Esophagus squamous epithelium (tissue), 5 donors: ENCODE measurements at regions of chr6 and their contacts with region 1.

Region 1: DNA sequence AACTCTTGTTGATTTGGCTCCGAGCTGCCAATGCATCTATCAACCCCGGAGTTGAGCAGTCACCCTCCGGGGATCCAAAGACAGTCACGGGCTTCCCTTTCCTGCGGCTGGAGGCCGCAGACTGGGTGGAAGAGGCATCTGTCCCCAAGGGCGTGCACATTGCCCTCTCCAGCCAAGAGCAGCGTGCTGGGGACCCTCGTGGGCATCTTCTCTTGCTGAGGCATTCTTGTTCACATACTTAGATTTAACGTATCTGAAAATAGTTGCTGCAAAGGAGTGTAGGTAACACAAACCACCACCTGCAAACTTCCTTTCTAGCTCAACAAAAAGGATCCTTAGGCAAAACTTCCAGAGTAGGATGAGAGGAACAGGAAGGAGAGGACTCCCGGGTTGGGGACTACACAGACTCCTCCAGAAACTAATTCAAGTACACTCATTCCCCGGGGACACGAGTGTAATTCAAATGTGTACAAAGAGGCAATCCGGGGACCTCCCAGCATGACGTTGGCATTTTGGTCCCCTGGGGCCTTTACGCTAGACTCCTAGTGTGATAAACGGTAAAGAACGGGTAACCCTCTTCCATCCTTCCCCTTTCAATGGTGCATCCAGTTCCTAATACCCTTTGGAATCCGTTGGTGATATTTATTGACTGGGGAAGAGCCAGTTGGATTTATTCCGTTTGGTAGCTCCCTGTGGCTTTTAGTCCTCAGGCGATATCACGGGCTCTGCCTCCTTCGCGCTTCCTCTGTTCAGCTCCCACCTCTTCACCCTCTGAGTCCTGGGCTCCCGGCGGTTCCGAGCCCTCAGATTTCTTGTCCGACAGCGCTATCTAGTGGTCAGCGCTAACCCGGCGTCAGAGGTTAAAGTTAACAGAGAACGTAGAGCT is 2.7 kb upstream of the COL12A1 start:
- DNase-seq: peak; percentile 4
- H3K4me3 ChIP-seq: peak overlapping the region in 3 of 4 donors; percentile 8 to 71 (median 59)
- H3K27ac ChIP-seq: peak overlapping the region; percentile 22 to 93 (median 62)
- H3K4me1 ChIP-seq: peaks cover 9 to 64% (median 20%) of the 10 kb centered on the region in 3 donors
- H3K27me3 ChIP-seq: peaks cover 0 to 53% (median 3%) of the 10 kb centered on the region in 4 donors
- CTCF ChIP-seq: peak; percentile 69 to 87 (median 85)
- POLR2A ChIP-seq: no peak

Region 2: DNA sequence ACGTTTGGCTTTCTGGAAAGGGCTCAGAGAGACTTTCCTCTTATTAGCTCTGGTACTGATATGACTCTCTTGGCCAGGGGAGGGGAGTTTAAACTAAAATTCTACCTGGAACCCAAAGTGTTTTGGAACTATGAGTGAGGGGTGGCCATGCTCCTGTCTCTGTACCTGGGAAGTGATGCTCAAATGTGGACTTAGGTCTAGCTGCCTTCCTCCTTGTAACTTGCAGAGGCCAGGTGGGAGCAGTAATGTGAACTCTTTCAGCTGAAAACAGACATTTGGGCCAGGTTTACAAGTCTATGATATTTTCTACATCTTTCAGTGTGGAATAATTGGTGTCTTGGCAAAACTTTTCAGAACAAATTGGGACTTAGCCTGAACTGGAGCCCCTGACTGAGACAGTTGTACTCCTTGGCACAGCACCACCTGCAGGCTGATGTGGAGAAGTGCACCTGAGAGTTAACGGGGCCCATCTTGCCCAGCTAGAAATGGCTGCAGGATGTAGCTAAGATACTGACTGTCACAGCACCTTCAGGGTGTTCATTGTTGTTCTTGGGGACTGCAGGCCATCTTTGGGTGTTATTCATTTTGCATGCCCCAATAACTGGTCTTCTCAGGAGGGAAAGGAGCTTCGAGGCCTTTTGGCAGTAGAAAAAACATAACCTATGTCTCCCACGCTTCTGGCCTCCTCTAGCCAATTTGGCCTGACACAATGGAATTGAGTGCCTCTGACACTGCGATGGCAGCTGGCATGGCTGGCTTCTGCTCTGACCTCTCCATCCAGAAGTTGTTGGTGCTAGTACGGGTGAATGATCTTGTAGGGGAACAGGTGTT is 1475.5 kb before region 1 on chr6:
- intact Hi-C with region 1: loop called (anchors 10 kb)
- DNase-seq: peak; percentile 10
- H3K4me3 ChIP-seq: no peak overlapping the region
- H3K27ac ChIP-seq: no peak overlapping the region
- H3K4me1 ChIP-seq: no peaks in the 10 kb centered on the region
- H3K27me3 ChIP-seq: no peaks in the 10 kb centered on the region
- CTCF ChIP-seq: peak; percentile 60 to 92 (median 87)
- POLR2A ChIP-seq: no peak

Region 3: DNA sequence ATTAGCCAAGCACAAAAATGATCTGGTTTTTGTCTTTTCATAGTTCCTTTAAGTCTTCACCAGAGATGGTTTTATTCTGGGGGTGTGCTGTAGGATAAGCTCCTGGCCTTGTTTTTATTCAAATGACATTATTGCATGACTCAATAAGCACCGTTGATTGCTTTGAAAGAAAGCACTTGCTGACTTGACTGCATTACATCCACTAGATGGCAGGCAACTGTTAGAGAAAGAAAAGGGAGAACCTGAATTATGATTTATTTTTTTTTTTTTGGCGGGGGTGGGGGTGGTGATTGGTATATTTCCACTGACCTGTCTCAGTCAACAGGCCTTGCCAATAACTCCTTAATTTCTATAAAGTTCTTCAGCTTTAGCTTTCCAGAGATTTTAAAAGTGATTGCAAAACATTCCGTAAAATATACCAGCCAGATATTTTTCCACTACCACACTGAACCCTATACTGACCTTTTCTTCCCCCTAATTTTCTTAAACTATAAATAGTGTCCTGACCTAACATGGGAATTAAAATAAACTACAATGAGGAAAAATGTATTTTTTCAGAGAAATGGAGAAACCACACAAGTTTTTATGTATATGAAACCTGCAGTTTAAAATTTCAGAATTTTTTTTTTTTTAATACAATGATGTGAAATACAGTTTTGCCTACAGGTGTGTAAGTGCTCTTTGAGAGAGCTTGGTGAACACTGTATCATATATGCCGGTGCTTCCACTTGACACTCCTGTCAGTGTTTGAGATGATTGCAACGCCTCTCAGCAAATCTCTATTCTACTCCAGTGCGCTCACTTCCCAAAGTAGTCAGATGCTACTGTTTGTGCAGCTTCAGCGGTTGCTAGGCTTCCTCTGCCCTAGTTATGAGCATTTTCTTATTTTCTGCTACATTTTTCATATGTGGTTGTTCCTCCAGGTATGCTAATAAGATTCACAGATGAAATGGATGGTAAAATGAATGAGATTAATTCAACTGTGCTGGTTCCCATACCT is 1238.3 kb before region 1 on chr6:
- intact Hi-C with region 1: loop called (anchors 10 kb)
- DNase-seq: no peak
- H3K4me3 ChIP-seq: no peak overlapping the region
- H3K27ac ChIP-seq: no peak overlapping the region
- H3K4me1 ChIP-seq: no peaks in the 10 kb centered on the region
- H3K27me3 ChIP-seq: no peaks in the 10 kb centered on the region
- CTCF ChIP-seq: peak in 5 of 6 experiments; percentile 20 to 60 (median 40)
- POLR2A ChIP-seq: no peak

Region 4: GRCh38 chr6:74091136-74091793 is 1117.3 kb before region 1 on chr6:
- intact Hi-C with region 1: loop called (anchors 10 kb)
- DNase-seq: no peak
- H3K4me3 ChIP-seq: no peak overlapping the region
- H3K27ac ChIP-seq: no peak overlapping the region
- H3K4me1 ChIP-seq: peaks cover 0 to 6% (median 0%) of the 10 kb centered on the region in 3 donors
- H3K27me3 ChIP-seq: no peaks in the 10 kb centered on the region
- CTCF ChIP-seq: peak in 5 of 6 experiments; percentile 45 to 71 (median 62)
- POLR2A ChIP-seq: no peak

Region 5: GRCh38 chr6:74409447-74409846 is 799.1 kb before region 1 on chr6:
- intact Hi-C with region 1: loop called (anchors 10 kb)
- DNase-seq: no peak
- H3K4me3 ChIP-seq: no peak overlapping the region
- H3K27ac ChIP-seq: no peak overlapping the region
- H3K4me1 ChIP-seq: no peaks in the 10 kb centered on the region
- H3K27me3 ChIP-seq: no peaks in the 10 kb centered on the region
- CTCF ChIP-seq: peak; percentile 29 to 61 (median 34)
- POLR2A ChIP-seq: no peak